ENCODE measurements at regions of chr7 and their contacts with region 1.

Region 1: GRCh38 chr7:74401137-74401859 is 52.4 kb upstream of the GTF2IRD1 start:
- DNase-seq: peak; percentile 65
- ATAC-seq: peak; percentile 36 to 81 (median 62)
- H3K4me3 ChIP-seq: no peak overlapping the region
- H3K27ac ChIP-seq: no peak overlapping the region
- H3K4me1 ChIP-seq: no peaks in the 10 kb centered on the region
- H3K27me3 ChIP-seq: no peaks in the 10 kb centered on the region
- CTCF ChIP-seq: peak; percentile 92 to 99 (median 96)

Region 2: DNA sequence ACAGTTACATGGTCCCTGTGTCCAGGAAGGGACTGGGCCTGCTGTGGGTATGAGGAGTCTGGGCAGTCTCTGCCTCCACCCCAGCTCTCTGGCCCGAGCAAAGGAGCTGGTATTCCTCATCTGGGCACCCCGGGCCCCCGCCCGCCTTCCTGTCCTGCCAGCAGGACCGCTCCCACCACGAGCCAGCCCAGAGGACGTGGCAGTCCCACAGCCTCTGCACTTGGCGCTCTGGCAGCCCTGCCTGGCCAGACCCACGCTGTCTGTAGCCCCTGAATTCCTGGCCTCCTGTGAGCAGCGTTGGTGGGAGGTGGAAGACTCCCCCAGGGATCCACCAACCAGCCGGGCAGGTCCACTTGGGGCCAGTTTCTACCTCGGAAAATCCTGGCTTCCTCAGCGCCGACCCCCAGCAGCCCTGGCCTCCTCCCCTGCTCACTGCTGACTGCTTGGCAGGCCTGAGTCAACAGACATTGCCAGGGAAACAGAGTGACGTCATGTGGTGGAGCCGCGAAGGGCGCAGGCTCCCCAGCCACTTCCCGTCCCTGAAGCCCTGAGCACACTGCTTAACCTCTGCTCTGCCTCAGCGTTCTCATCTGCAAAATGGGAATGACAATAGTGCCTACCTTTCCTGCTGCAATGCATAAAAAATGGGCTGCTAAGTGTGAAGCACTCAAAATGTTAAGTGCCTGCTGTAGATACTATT is 339.3 kb before region 1 on chr7:
- intact Hi-C with region 1: loop called in 5 of 10 experiments (anchors 5 to 10 kb)
- DNase-seq: peak; percentile 78 to 88
- ATAC-seq: peak; percentile 90 to 96 (median 93)
- H3K4me3 ChIP-seq: peak overlapping the region in 7 of 10 donors; percentile 3 to 31 (median 20)
- H3K27ac ChIP-seq: peak overlapping the region in 9 of 10 donors; percentile 33 to 89 (median 80)
- H3K4me1 ChIP-seq: peaks cover 0 to 14% (median 8%) of the 10 kb centered on the region in 9 donors
- H3K27me3 ChIP-seq: no peaks in the 10 kb centered on the region
- CTCF ChIP-seq: no peak

Region 3: GRCh38 chr7:74074770-74075169 is 326.5 kb before region 1 on chr7:
- intact Hi-C with region 1: loop called (anchors 2 to 10 kb)
- DNase-seq: no peak
- ATAC-seq: no peak
- H3K4me3 ChIP-seq: no peak overlapping the region
- H3K27ac ChIP-seq: no peak overlapping the region
- H3K4me1 ChIP-seq: peaks cover 0 to 5% (median 0%) of the 10 kb centered on the region in 9 donors
- H3K27me3 ChIP-seq: no peaks in the 10 kb centered on the region
- CTCF ChIP-seq: no peak

Region 4: DNA sequence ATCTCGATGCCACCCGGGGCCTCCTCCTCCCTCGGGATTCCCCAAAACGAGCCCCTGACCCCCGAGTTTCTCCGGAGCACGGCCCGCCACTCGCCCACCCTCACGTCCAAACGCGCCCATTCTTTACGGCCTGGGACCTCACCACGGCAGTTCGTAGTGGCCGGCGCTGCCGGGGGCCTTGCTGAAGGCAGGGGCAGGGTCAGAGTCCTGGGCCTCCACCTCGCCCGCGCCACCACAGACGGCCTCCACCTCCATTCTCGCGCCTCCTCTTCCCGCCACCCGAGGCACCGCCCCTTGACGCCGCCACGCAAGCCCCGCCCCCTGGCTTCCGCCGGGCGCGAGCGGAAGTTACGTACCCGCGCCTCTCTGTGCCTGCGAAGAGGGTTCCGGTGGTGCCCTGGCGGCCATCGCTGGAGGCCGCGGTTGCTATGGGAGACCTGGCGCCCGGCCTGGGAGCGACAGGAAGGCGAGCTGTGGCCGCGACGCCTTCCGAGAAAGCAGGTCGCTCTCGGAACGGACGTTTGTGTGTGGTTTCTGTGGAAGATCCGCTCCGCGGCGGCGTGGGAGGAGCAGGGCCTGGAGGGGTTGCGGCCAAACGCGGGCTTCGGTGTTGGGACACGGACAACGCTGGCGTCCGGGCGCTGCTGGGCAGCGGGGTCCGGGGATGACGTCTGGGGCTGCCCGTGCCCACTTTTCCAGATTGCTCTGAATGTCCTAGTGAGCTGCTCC is 147.0 kb before region 1 on chr7 and contains the start of gene RFC2:
- intact Hi-C with region 1: loop called in 1 of 10 experiments (anchors 10 kb)
- DNase-seq: peak; percentile 97 to 98
- ATAC-seq: peak; percentile 99 to 100 (median 100)
- H3K4me3 ChIP-seq: peak within 1 kb of the TSS; percentile 47 to 95 (median 78)
- H3K27ac ChIP-seq: peak within 1 kb of the TSS; percentile 89 to 98 (median 93)
- H3K4me1 ChIP-seq: peaks cover 3 to 38% (median 28%) of the 10 kb centered on the region in 9 donors
- H3K27me3 ChIP-seq: no peaks in the 10 kb centered on the region
- CTCF ChIP-seq: peak in 8 of 9 donors; percentile 16 to 54 (median 43)
- total RNA-seq, gene RFC2: 7.0 to 13.1 (median 10.7) TPM

Measured in heart right ventricle (tissue), 16 donors.